Sigmoid colon (tissue), 7 donors: ENCODE measurements at regions of chr1 and their contacts with region 1.

Region 1: DNA sequence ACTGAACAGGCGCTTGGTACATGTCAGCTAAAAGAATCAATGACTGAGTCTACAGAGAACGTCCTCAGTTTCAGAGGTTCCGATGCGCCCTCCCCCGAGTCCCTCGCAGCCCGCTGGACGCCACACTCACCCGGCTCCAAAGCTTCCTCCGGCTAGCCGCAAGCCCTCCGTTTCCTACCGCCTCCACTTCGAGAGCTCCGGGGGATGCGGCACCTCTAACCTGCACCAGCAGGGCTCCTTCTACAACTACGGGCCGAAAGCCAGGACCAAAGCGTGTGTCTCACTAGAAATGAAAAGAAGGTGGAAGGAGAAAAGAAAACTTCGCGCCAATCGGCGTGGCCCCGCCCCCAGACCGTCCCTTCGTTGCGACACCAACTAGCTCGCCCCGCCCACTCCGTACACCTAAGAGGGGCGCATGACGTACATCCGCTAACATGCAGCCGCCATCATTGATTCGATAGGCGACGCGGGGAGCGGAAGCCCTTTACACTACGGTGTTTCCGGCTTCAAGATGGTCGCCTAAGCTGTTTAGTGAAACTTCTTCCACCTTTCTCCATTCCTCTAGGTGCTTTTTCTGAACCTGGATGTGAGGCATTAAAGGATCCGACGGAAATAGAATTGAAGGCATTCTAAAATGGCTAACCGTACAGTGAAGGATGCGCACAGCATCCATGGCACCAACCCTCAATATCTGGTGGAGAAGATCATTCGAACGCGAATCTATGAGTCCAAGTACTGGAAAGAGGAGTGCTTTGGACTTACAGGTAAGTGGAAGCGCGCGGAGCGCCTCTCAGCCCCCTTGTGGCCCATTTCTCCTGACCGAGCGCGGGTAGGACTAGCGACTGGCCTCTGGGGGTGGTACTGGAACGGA is at the starts of genes ORC1 and PRPF38A:
- DNase-seq: peak; percentile 99
- H3K4me3 ChIP-seq: peak within 1 kb of the TSS; percentile 56 to 87 (median 78)
- H3K27ac ChIP-seq: peak within 1 kb of the TSS; percentile 84 to 90 (median 89)
- H3K4me1 ChIP-seq: peaks cover 0 to 26% (median 23%) of the 10 kb centered on the region in 4 donors
- H3K27me3 ChIP-seq: no peaks in the 10 kb centered on the region
- CTCF ChIP-seq: peak; percentile 10 to 69 (median 48)
- EP300 ChIP-seq: no peak
- POLR2A ChIP-seq: peak; percentile 39 to 67
- total RNA-seq, gene ORC1: 0.36 to 0.95 TPM in 2 of 4 donors, not detected in the others
- total RNA-seq, gene PRPF38A: 12.4 to 20.0 (median 17.5) TPM

Region 2: GRCh38 chr1:52365746-52366516 is 38.4 kb before region 1 on chr1 and contains the start of gene CC2D1B:
- intact Hi-C with region 1: loop called (anchors 1 kb)
- DNase-seq: peak; percentile 99
- H3K4me3 ChIP-seq: peak within 1 kb of the TSS; percentile 80 to 96 (median 95)
- H3K27ac ChIP-seq: peak within 1 kb of the TSS; percentile 93 to 96 (median 94)
- H3K4me1 ChIP-seq: peaks cover 0 to 24% (median 21%) of the 10 kb centered on the region in 4 donors
- H3K27me3 ChIP-seq: no peaks in the 10 kb centered on the region
- CTCF ChIP-seq: peak in 1 of 4 experiments; percentile 32
- EP300 ChIP-seq: peak in 1 of 4 donors; percentile 44
- POLR2A ChIP-seq: peak; percentile 78 to 79
- total RNA-seq, gene CC2D1B: 15.6 to 20.8 (median 18.2) TPM

Region 3: DNA sequence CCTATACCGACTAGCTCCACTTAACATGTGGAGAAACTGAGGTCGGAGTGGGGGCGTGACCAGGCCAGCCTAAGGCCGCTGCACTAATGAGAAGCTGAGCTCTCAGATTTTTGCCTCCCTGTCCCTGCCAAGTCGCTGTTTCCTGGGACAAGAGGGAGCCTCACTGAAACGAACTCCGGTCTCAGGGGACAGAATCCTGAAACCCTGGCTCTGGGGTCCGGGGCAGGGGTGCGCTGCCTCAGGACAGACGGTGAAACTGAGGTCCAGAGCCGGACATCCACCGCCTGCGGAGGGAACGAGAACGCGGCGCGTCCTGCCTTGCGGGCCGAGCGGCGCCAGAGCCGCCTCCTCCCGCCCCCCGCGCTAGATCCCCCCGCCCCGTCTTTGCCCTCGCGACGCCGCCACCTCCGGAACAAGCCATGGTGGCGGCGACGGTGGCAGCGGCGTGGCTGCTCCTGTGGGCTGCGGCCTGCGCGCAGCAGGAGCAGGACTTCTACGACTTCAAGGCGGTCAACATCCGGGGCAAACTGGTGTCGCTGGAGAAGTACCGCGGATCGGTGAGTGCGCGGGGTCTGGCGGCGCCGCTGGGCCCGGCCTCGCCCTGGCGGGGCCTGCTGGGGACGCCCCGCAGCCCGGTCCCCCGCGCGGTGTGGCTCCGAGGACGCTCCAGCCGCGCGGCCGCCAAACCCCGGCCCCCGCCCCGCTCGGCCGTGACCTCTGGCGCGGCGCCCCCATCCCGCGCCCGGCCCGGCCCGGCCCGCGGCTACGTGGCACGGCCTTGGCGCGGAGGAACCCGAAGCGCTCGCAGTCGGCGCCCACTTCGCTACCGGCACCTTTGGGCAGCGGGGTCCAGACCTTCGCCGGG is 197.9 kb after region 1 on chr1 and contains the start of gene GPX7:
- intact Hi-C with region 1: loop called (anchors 5 kb)
- DNase-seq: peak; percentile 70
- H3K4me3 ChIP-seq: peak within 1 kb of the TSS; percentile 46 to 71 (median 64)
- H3K27ac ChIP-seq: peak within 1 kb of the TSS; percentile 80 to 89 (median 84)
- H3K4me1 ChIP-seq: peaks cover 0 to 33% (median 26%) of the 10 kb centered on the region in 4 donors
- H3K27me3 ChIP-seq: no peaks in the 10 kb centered on the region
- CTCF ChIP-seq: no peak
- EP300 ChIP-seq: no peak
- POLR2A ChIP-seq: no peak
- total RNA-seq, gene GPX7: 17.0 to 49.3 (median 24.5) TPM

Region 4: GRCh38 chr1:53792806-53793205 is 1388.5 kb after region 1 on chr1:
- intact Hi-C with region 1: no loop called
- DNase-seq: no peak
- H3K4me3 ChIP-seq: no peak overlapping the region
- H3K27ac ChIP-seq: no peak overlapping the region
- H3K4me1 ChIP-seq: no peaks in the 10 kb centered on the region
- H3K27me3 ChIP-seq: no peaks in the 10 kb centered on the region
- CTCF ChIP-seq: no peak
- EP300 ChIP-seq: no peak
- POLR2A ChIP-seq: no peak